HEK293T (cell line): ENCODE measurements at regions of chr4 and their contacts with region 1.

Region 1: DNA sequence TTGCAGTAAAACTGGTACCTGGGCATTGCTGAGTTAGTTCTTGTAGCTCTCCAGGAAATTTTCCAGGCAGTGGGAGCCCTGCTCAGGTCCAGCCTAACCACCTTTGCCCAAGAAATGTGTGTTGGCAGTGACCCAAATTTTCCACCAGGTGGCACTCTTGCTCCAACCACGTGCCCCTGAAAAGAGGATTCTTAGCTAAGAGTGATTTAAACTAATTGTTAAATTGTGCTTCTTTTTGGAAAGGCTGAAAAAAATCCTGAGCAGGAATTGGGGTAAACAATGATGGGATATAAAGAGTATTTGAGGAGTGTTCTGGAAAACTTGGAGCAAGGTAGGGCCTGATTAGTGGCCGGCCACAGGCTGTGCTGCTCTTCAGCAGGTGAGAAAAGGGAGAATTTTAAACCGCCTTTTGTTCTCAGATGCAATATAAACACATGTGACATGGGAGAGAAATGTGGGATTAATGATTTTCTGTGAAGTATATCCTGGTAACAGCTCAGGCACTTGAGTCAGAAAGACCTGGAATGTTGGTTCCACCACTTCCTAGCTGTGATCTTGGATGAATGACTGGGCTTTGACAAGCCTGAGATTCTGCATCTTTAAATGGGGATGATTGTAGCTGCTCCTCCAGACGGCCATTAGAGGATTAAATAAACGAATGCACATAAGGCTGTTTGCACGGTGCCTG is 219.6 kb downstream of the PTTG2 start:
- DNase-seq: peak; percentile 54

Region 2: DNA sequence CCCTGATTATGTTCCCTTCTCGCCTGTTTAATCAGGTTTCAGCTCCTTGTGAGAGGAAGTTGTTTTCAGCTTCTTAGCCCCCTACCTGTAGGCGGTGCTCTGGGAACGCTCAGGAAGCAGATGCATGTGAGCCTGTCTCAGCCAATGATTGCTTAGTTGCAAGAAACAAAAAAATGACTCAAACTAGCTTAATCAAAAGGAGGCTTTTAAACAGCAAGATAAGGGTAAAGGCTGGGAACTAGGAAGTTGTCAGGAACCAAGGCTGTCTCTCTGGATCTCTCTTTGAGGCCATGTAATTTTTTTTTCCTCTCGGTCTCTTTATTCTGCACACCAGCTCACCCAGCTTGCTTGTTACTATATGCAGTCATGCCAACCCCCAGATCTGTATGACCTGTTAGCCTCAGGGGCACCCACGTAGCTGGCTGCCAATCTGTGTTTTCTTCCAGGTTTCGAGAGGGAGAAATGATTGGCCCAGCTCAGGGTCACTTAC is 110.5 kb before region 1 on chr4:
- CTCF ChIA-PET with region 1: interaction called, 12 read pairs
- POLR2A ChIA-PET with region 1: no interaction called
- DNase-seq: no peak

Region 3: GRCh38 chr4:38675146-38676121 is 495.6 kb after region 1 on chr4:
- CTCF ChIA-PET with region 1: interaction called, 12 read pairs
- POLR2A ChIA-PET with region 1: no interaction called
- DNase-seq: peak; percentile 46

Region 4: DNA sequence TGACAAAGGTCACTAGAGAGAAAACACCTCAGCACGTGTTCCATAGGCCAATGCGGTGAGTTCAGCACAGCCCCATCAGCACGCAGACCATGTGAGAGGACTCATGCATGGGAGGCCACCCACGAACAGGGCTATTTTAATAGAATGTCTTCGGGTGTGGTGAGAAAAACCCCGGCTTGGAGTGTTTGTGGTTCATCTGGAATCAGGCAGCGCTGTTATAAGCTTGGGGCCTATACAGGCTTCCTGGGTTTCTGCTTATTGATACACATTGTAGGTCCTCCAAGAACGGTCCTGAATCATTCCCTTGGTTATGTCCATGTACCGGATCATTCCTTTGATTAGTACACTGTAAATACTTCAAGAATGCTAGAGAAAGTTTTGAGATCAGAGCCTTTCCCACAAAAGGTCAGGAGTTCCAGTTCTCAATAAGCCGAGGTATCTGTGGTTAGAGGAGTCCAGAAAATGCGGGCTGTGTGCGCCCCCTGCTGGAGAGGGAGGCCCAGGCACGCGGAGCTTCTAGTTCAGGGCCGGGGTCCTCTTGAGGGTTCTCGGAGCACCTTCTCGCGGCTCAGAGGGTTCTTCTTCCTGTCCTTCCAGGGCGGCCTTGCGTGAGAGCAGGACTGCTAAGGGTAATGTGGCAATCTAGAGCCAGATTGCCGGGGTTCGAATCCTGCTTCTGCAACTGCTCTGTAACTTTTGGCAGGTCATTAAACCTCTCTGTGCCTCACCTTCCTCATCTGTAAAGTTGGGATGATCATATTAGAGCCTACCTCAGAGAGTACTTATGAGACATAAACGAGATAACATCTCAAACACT is 551.2 kb after region 1 on chr4:
- CTCF ChIA-PET with region 1: interaction called, 21 read pairs
- POLR2A ChIA-PET with region 1: no interaction called
- DNase-seq: peak; percentile 67